GM10248 (cell line): ENCODE measurements at regions of chr11 and their contacts with region 1.

Region 1: DNA sequence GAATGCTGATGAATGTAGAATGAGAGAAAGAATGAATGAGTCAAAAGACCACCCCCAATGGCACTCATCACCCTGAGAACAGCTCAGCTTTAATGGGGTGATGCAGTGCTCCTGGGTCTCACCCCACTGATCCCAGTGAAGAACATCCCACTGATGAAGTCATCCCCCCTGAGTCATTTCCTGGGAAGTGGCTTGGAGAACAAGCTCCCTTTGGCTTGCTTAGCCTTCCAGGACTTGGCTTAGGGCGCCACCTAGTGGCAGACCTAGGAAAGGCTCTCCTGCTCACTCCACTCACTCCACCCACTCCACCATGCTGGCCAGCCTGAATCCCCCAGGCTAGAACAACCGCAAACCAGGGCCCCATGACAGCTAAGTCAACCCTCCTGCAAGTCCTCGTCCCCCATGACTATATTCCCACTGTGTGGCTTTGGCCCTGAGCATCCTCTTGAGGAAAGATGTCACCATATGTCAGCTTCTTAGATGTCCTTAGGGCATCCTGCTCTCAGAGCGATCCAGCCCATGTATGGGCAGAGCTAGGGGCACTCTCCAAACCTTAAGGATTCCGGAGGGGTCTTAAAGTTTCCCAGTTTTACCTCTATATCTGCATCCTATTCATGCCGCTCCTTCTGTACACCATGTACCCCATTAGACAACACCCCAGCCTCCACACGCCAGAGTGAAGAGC is 17.8 kb upstream of the TMPRSS13 start:
- DNase-seq: peak; percentile 79
- CTCF ChIP-seq: peak; percentile 93

Region 2: DNA sequence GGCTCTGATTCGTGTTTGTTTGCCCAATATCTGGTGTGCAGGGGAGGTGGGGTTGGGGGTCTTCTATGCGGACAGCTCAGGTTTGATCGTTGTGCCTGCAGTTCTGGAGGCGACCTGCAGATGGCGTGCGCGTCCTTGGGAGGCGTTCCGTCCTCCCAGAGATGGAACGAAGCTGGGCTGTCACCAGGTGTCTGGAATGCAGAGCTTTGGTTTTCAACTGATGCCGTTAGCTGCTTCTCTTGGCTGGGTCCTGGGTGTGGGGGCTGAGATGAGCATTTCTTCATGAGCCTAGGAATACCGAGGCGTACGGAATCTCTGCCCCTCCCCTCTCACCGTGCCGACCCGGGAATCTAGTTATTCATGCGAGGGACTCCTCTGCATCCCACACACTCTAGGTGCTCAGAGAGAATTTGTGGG is 520.7 kb before region 1 on chr11:
- CTCF ChIA-PET with region 1: interaction called, 35 read pairs
- POLR2A ChIA-PET with region 1: no interaction called
- DNase-seq: peak; percentile 85
- CTCF ChIP-seq: peak; percentile 95

Region 3: GRCh38 chr11:117828611-117829368 is 118.2 kb before region 1 on chr11:
- CTCF ChIA-PET with region 1: interaction called, 54 read pairs
- POLR2A ChIA-PET with region 1: no interaction called
- DNase-seq: peak; percentile 76
- CTCF ChIP-seq: no peak

Region 4: DNA sequence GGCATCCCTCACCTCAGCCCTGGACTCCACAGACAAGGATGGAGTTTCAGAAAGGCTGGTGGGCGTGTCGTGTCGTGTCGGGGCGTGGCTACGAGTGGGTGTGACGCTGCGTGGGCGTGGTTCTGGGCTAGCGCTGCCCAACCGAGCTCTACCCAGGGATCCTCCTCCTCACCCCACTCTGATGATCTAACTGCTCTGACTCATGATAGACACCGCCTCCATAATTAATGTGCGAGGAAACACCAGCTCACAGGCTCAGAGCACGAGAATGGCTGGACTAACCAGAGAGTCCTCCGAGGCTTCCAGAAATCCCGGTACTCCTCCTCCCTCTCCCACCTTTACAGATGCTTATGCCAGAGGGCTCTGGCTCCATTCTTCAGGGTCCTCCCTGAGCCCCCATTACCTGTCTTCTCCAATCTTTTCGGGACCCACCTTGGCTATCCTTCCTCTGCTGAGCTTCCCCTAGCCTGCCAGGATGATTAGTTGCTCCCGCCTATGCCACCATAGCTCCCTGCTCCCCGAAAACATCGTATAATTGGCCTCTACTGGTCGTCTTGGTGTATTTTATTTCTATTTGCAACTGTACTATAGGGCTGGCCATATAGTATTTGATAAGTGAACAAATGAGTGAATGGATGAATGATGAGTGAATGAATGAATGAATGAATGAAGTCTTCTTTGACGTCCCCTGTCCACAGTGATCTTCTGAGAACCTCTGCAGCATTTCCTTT is 39.6 kb before region 1 on chr11:
- CTCF ChIA-PET with region 1: interaction called, 21 read pairs
- POLR2A ChIA-PET with region 1: no interaction called
- DNase-seq: peak; percentile 67
- CTCF ChIP-seq: no peak

Region 5: DNA sequence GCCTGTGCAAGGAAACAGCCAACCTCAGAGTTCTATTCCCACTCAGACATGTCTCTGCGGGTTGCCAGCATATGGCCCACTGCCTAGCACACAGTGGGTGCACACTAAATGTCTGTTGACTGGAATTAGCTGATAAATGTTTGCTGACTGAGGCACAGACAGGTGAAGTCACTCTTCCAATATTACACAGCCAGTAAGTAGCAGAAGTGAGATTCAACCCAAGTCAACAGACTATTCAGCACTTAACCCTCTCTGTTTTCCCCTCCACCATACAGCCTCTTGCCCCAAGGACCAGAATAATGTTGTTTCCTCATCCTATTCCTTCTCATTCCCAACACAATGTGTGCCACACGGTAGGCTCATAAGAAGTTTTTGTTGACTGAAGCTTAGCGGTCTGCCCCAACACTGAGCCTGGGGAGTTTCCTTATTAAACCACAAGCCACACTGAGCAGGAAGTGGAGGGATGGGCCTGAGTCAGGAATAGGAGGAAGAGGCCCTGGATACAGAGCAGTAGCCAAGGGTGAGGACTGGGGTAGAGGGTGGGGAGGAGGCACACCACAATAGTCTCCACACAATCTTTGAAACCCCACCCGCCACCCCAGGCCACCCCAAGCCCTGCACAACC is 23.5 kb after region 1 on chr11:
- CTCF ChIA-PET with region 1: interaction called, 22 read pairs
- POLR2A ChIA-PET with region 1: no interaction called
- DNase-seq: no peak
- CTCF ChIP-seq: no peak

Region 6: DNA sequence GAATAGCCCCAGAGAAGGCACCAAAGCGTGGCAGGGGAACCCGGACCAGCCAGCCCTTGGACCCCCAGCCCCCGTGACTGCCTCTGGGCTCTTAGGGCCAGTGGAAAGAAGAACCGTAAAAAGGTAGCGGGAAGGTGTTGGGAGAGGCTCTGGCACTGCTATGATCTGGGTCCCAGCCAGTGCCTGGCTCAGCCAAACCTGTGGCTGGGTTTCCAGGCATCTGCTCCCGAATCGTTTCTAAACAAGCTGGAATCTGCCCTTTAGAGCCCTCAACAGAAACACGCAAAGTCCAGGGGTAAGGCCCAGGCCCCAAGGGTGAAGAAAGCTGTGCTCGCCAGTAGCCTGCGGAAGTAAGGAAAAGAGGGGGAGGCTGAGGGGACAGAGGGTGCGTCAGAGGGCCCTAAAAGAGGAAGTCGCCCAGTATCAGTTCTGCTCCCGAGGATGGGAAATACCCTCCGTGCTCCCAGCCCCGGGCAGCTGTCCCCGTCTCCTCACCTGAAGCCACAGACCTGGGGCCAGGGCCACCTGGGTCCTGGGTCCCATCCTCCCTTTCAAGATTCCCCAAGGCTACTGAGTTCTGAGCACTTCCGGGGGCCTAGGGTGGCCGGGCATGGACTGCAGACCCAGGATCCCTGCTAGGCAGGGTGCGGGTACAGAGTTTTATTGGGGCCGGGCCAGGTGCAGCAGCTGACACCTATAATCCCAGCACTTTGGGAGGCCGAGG is 63.9 kb after region 1 on chr11:
- CTCF ChIA-PET with region 1: interaction called, 15 read pairs
- POLR2A ChIA-PET with region 1: no interaction called
- DNase-seq: peak; percentile 90
- CTCF ChIP-seq: no peak